ENCODE measurements at regions of chr19 and their contacts with region 1.

Region 1: GRCh38 chr19:31054430-31054829 is 294.8 kb downstream of the TSHZ3 start:
- DNase-seq: peak; percentile 43
- H3K4me3 ChIP-seq: no peak overlapping the region
- H3K27ac ChIP-seq: no peak overlapping the region
- H3K4me1 ChIP-seq: no peaks in the 10 kb centered on the region
- H3K27me3 ChIP-seq: no peaks in the 10 kb centered on the region
- CTCF ChIP-seq: peak; percentile 75 to 86

Region 2: GRCh38 chr19:30984847-30985246 is 69.6 kb before region 1 on chr19:
- CTCF ChIA-PET with region 1: no interaction called
- dilution Hi-C with region 1: no loop called
- in situ Hi-C with region 1: no loop called
- intact Hi-C with region 1: no loop called
- DNase-seq: no peak
- H3K4me3 ChIP-seq: no peak overlapping the region
- H3K27ac ChIP-seq: no peak overlapping the region
- H3K4me1 ChIP-seq: no peaks in the 10 kb centered on the region
- H3K27me3 ChIP-seq: no peaks in the 10 kb centered on the region
- CTCF ChIP-seq: no peak

Region 3: DNA sequence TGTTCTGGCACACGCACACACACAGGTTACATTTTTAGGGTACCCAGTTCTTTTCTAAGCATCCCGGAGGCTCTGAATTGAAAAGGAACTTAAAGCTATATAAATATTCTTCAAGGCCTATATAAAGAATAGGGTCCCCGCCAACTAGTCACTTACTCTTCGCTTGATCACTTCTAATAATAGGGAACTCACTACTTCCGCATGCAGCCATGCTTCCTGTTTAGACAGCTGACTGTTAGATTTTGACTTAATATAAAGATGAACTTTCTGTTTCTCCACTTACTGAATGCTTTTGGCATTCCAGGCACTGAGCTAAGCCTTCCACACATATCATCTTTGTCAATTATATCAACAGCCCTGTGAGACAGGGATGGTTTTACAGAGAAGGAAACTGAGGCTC is 35.3 kb after region 1 on chr19:
- CTCF ChIA-PET with region 1: no interaction called
- dilution Hi-C with region 1: no loop called
- in situ Hi-C with region 1: no loop called
- intact Hi-C with region 1: no loop called
- DNase-seq: no peak
- H3K4me3 ChIP-seq: no peak overlapping the region
- H3K27ac ChIP-seq: no peak overlapping the region
- H3K4me1 ChIP-seq: no peaks in the 10 kb centered on the region
- H3K27me3 ChIP-seq: no peaks in the 10 kb centered on the region
- CTCF ChIP-seq: no peak

Region 4: GRCh38 chr19:31110331-31110730 is 55.9 kb after region 1 on chr19:
- CTCF ChIA-PET with region 1: no interaction called
- dilution Hi-C with region 1: no loop called
- in situ Hi-C with region 1: no loop called
- intact Hi-C with region 1: loop called (anchors 1 kb)
- DNase-seq: peak; percentile 27
- H3K4me3 ChIP-seq: no peak overlapping the region
- H3K27ac ChIP-seq: no peak overlapping the region
- H3K4me1 ChIP-seq: no peaks in the 10 kb centered on the region
- H3K27me3 ChIP-seq: no peaks in the 10 kb centered on the region
- CTCF ChIP-seq: peak; percentile 40 to 81

Region 5: DNA sequence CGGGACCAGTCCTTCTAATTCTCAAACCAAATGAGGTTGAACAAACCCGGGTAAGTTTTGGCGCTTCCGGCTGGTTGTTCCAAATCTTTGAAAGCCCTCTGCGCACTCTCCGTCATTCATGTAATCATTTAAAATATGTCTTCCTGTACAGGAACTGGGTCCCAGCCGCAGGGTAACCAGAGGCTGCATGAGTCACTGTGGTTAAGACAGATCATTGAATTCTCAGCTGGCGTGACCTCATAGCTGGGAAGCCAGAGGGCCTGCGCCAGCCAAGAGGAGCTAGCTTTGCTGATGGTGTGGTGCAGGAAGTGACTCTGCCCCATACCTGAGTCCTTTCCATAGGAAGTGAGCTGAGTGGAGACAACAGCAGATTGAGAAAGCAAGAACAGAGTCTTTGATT is 159.7 kb after region 1 on chr19:
- CTCF ChIA-PET with region 1: no interaction called
- dilution Hi-C with region 1: no loop called
- in situ Hi-C with region 1: no loop called
- intact Hi-C with region 1: loop called (anchors 10 kb)
- DNase-seq: peak; percentile 99
- H3K4me3 ChIP-seq: no peak overlapping the region
- H3K27ac ChIP-seq: peak overlapping the region; percentile 77
- H3K4me1 ChIP-seq: peaks cover 20% of the 10 kb centered on the region
- H3K27me3 ChIP-seq: no peaks in the 10 kb centered on the region
- CTCF ChIP-seq: no peak

Region 6: GRCh38 chr19:31356587-31357314 is 302.3 kb after region 1 on chr19:
- CTCF ChIA-PET with region 1: interaction called, 3 read pairs
- dilution Hi-C with region 1: no loop called
- in situ Hi-C with region 1: no loop called
- intact Hi-C with region 1: loop called (anchors 1 kb)
- DNase-seq: no peak
- H3K4me3 ChIP-seq: no peak overlapping the region
- H3K27ac ChIP-seq: no peak overlapping the region
- H3K4me1 ChIP-seq: peaks cover 3% of the 10 kb centered on the region
- H3K27me3 ChIP-seq: no peaks in the 10 kb centered on the region
- CTCF ChIP-seq: peak; percentile 17 to 55

Region 7: GRCh38 chr19:32224371-32225244 is 1170.2 kb after region 1 on chr19:
- CTCF ChIA-PET with region 1: no interaction called
- dilution Hi-C with region 1: no loop called
- in situ Hi-C with region 1: no loop called
- intact Hi-C with region 1: loop called (anchors 5 kb)
- DNase-seq: peak; percentile 27
- H3K4me3 ChIP-seq: no peak overlapping the region
- H3K27ac ChIP-seq: no peak overlapping the region
- H3K4me1 ChIP-seq: peaks cover 3% of the 10 kb centered on the region
- H3K27me3 ChIP-seq: peaks cover 4% of the 10 kb centered on the region
- CTCF ChIP-seq: peak; percentile 71 to 86